ENCODE measurements at regions of chr11 and their contacts with region 1.

Region 1: DNA sequence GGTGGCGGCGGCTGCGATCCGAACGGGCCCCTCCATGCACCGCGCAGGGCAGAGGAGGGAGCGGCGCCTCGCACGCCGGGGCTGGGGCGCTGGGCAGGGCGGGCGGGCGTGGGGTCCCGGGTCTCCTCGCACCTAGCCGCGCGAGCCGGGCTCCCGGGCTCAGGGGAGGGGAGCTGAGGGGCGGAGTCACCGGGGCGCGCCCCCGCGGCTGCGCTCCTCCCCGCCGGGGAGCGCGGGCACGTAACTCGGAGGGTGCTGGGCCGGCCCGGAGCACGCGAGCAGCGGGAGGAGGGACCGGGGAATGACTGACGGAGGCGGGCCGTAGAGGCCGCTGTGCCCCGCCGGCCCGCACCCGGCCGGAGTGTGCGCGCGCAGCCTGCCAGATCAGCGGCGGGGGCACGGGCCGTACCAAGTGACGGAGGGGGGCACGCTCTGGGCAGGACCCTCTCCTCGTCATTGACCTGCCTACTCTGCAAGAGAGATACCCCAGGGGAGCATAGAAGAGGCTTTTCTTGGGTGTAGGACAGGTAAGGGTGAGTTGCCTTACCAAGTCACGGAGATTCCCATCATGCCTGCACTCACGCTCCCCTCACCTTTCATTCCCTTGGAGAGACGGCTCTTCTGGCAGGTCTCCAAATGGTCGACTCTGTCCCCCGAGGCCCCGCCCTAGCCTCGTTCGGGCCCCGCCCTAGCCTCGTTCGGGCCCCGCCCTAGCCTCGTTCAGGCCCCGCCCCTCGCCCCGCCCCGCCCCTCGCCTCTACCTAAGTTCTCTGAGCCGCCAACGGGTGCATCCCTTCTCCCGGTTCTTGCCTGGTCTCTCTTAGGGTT is at the start of gene CDON:
- DNase-seq: peak; percentile 86
- H3K4me3 ChIP-seq: peak within 1 kb of the TSS; percentile 56 to 67 (median 60)
- H3K27ac ChIP-seq: peak within 1 kb of the TSS; percentile 95
- H3K4me1 ChIP-seq: peaks cover 4% of the 10 kb centered on the region
- H3K27me3 ChIP-seq: no peaks in the 10 kb centered on the region
- CTCF ChIP-seq: peak in 1 of 2 donors; percentile 10
- total RNA-seq, gene CDON: 1.9 to 3.8 TPM

Region 2: GRCh38 chr11:125923012-125923579 is 139.8 kb before region 1 on chr11:
- CTCF ChIA-PET with region 1: no interaction called
- dilution Hi-C with region 1: no loop called
- in situ Hi-C with region 1: loop called in 1 of 2 experiments (anchors 25 kb)
- intact Hi-C with region 1: loop called (anchors 1 kb)
- DNase-seq: peak; percentile 50
- H3K4me3 ChIP-seq: no peak overlapping the region
- H3K27ac ChIP-seq: no peak overlapping the region
- H3K4me1 ChIP-seq: no peaks in the 10 kb centered on the region
- H3K27me3 ChIP-seq: peaks cover 3% of the 10 kb centered on the region
- CTCF ChIP-seq: peak; percentile 88 to 93

Region 3: GRCh38 chr11:126083829-126084607 is 21.1 kb after region 1 on chr11:
- CTCF ChIA-PET with region 1: no interaction called
- dilution Hi-C with region 1: no loop called
- in situ Hi-C with region 1: no loop called
- intact Hi-C with region 1: no loop called
- DNase-seq: no peak
- H3K4me3 ChIP-seq: no peak overlapping the region
- H3K27ac ChIP-seq: no peak overlapping the region
- H3K4me1 ChIP-seq: no peaks in the 10 kb centered on the region
- H3K27me3 ChIP-seq: no peaks in the 10 kb centered on the region
- CTCF ChIP-seq: no peak

Measured in mammary epithelial cell (primary cell).